ENCODE measurements at regions of chr1 and their contacts with region 1.

Region 1: GRCh38 chr1:100543640-100544039 is 5.7 kb downstream of the GPR88 start:
- DNase-seq: no peak
- H3K4me3 ChIP-seq: no peak overlapping the region
- H3K27ac ChIP-seq: no peak overlapping the region
- H3K27me3 ChIP-seq: peaks cover 18% of the 10 kb centered on the region
- CTCF ChIP-seq: peak; percentile 25; the same call in 1 of the 2 replicates

Region 2: DNA sequence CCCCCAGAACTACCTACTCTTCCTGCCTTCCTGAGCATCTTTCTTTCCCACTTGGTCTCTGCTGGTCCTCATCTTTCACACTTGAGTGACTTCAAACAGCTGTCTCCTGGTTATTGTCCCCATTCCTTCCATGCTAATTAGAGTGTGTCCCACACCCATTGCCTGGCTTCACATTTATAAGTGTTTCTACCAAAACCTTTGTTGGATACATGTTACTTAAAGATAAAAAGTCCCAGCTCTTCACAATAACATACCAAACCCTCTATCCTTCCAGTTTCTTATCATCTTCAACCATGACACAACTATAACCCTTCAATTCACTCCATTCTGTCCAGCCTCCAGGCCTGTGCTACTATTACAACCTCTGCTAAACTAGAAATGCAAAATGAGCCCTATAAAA is 216.9 kb after region 1 on chr1:
- CTCF ChIA-PET with region 1: no interaction called
- POLR2A ChIA-PET with region 1: interaction called, 12 read pairs
- DNase-seq: no peak
- H3K4me3 ChIP-seq: no peak overlapping the region
- H3K27ac ChIP-seq: no peak overlapping the region
- H3K27me3 ChIP-seq: no peaks in the 10 kb centered on the region
- CTCF ChIP-seq: no peak

Measured in AG04450 (cell line).